BJ (cell line): ENCODE measurements at regions of chr12 and their contacts with region 1.

Region 1: DNA sequence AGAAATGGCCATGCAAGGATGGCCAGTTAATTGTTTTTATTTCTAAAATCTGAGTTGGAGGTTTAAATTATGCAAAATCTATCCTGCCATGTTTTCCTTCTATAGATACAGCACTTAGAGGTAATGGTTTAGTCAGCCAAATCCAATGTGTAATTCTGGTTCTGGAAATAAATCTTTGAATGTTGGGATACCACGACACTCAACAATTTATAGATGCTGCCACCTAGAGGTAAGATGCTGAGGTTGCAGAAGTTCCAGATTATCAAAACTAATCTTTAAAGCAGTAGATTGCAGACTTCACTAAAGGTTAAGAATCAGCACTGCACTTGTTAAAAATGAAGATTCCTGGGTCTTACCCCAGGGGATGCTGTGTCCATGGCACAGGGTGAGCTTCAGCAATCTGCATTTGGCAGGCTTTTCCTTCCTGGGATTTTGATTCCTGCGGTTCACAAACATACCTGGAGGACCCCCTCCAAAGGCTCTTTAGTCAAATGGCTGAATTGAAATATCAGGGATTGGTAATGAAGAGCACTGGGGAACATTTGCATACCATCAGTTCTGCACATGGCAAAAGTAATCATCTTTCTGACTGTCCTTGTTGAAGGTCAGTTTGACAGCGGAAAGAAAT is 53.4 kb upstream of the ANO4 start:
- DNase-seq: no peak
- H3K4me3 ChIP-seq: no peak overlapping the region
- H3K27me3 ChIP-seq: no peaks in the 10 kb centered on the region
- CTCF ChIP-seq: peak; percentile 76

Region 2: GRCh38 chr12:100672075-100672592 is 69.1 kb before region 1 on chr12:
- CTCF ChIA-PET with region 1: interaction called, 12 read pairs
- POLR2A ChIA-PET with region 1: no interaction called
- DNase-seq: no peak
- H3K4me3 ChIP-seq: no peak overlapping the region
- H3K27me3 ChIP-seq: peaks cover 1% of the 10 kb centered on the region
- CTCF ChIP-seq: peak; percentile 61

Region 3: GRCh38 chr12:100753837-100754236 is 12.6 kb after region 1 on chr12:
- CTCF ChIA-PET with region 1: interaction called, 15 read pairs
- POLR2A ChIA-PET with region 1: no interaction called
- DNase-seq: no peak
- H3K4me3 ChIP-seq: no peak overlapping the region
- H3K27me3 ChIP-seq: no peaks in the 10 kb centered on the region
- CTCF ChIP-seq: no peak